ENCODE measurements at regions of chr16 and their contacts with region 1.

Region 1: GRCh38 chr16:1193143-1193824 is 31.8 kb downstream of the TPSG1 start:
- DNase-seq: no peak
- H3K4me3 ChIP-seq: no peak overlapping the region
- H3K27ac ChIP-seq: no peak overlapping the region
- H3K4me1 ChIP-seq: no peaks in the 10 kb centered on the region
- H3K27me3 ChIP-seq: no peaks in the 10 kb centered on the region
- CTCF ChIP-seq: no peak
- POLR2A ChIP-seq: no peak

Region 2: DNA sequence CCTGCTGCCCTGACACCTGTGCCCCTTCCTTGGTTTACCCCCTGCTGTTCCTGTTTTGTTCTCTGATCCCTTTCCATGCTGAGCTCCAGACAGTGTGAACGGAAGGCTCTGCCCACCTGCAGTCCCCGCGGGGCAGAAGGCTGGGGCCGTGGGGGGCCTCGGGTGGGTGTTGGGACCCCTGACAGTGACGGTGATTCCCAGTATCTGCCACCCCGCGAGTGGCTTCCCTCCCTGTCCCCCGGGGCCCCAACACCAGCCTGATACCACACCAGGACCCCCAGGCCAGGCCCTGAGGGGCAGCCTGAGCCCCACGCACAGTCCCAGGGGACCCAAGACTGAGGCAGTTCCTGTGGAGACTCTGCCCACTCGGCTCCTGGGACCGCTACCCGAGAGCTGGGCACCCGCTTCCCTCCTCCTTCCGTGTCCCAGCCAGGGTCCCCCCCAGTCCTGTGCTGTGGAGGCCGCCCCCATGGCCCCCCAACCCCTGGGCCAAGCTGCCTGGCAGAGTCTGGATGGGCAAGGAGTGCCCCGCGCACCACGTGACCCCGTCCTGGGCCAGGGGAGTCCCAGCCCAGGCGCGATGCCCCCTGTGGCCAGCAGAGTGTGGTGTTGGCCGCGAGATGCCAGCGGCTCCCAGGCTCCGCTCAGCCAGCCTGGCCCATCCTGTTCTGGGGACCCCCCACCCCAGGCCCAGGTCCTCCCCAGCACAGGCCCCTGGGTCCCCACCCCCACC is 87.2 kb before region 1 on chr16:
- intact Hi-C with region 1: loop called (anchors 1 kb)
- DNase-seq: peak; percentile 73
- H3K4me3 ChIP-seq: no peak overlapping the region
- H3K27ac ChIP-seq: no peak overlapping the region
- H3K4me1 ChIP-seq: peaks cover 9% of the 10 kb centered on the region
- H3K27me3 ChIP-seq: peaks cover 6% of the 10 kb centered on the region
- CTCF ChIP-seq: peak; percentile 87 to 97 (median 91)
- POLR2A ChIP-seq: no peak